ENCODE measurements at regions of chr14 and their contacts with region 1.

Region 1: GRCh38 chr14:76918751-76919543 is 92.7 kb downstream of the LRRC74A start:
- DNase-seq: peak; percentile 53
- ATAC-seq: peak; percentile 33
- H3K4me3 Mint-ChIP-seq: no peak overlapping the region; the same call in 1 of the 2 replicates
- H3K27ac Mint-ChIP-seq: peak overlapping the region; percentile 85
- H3K4me1 Mint-ChIP-seq: peaks cover 81% of the 10 kb centered on the region
- H3K27me3 Mint-ChIP-seq: no peaks in the 10 kb centered on the region
- CTCF ChIP-seq: no peak

Region 2: GRCh38 chr14:76929927-76930326 is 11.0 kb after region 1 on chr14:
- CTCF ChIA-PET with region 1: interaction called, 33 read pairs
- POLR2A ChIA-PET with region 1: interaction called, 3 read pairs
- DNase-seq: no peak
- ATAC-seq: peak; percentile 54
- H3K4me3 Mint-ChIP-seq: no peak overlapping the region
- H3K27ac Mint-ChIP-seq: peak overlapping the region; percentile 73
- H3K4me1 Mint-ChIP-seq: peaks cover 71% of the 10 kb centered on the region
- H3K27me3 Mint-ChIP-seq: no peaks in the 10 kb centered on the region
- CTCF ChIP-seq: no peak

Region 3: DNA sequence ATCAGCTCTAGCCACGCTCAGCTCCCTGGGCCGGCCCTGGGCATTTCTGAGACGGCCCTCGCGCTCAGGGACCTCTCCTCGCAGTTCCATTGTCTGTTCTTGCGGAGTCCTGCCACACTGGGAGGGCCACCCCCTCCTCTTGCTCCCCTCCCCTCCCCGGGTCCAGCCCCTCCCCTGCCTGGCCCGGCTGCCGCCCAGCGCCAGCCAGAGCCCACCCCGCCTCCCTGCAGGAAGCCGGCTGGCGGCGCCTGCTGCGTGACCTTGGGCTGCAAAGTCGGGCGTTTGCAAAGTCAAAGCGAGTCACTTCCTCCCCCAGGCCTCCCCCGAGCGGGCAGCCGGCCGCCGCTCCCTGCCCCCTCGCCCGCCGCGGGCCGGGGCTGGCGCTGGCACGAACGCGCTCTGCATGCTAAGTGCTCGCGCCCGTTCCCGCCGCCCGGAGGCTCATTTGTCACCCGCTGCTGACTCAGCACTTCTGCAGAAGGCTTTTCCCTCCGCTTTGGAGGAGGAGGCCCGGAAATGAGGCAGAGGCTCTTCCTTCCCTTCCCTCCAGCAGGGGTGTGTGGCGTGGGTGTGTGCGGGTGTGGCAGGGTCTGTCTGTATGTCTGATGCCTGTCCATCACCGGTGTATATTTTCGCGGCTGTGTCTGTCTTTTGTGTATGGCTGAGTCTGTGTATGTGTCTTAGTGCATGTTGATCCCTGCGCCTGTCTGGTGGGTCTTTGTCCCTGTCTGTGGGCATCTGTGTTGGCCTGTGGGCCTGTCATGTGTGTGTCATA is 37.6 kb after region 1 on chr14:
- CTCF ChIA-PET with region 1: interaction called, 22 read pairs
- POLR2A ChIA-PET with region 1: interaction called, 11 read pairs
- DNase-seq: peak; percentile 92
- ATAC-seq: peak; percentile 71
- H3K4me3 Mint-ChIP-seq: peak overlapping the region; percentile 55
- H3K27ac Mint-ChIP-seq: peak overlapping the region; percentile 98
- H3K4me1 Mint-ChIP-seq: peaks cover 71% of the 10 kb centered on the region
- H3K27me3 Mint-ChIP-seq: no peaks in the 10 kb centered on the region
- CTCF ChIP-seq: no peak

Region 4: GRCh38 chr14:76985540-76986230 is 66.7 kb after region 1 on chr14:
- CTCF ChIA-PET with region 1: interaction called, 12 read pairs
- POLR2A ChIA-PET with region 1: no interaction called
- DNase-seq: no peak
- ATAC-seq: peak; percentile 23; the same call in 1 of the 2 replicates
- H3K4me3 Mint-ChIP-seq: no peak overlapping the region
- H3K27ac Mint-ChIP-seq: peak overlapping the region; percentile 57; the same call in 1 of the 2 replicates
- H3K4me1 Mint-ChIP-seq: peaks cover 43% of the 10 kb centered on the region
- H3K27me3 Mint-ChIP-seq: no peaks in the 10 kb centered on the region
- CTCF ChIP-seq: no peak

Region 5: DNA sequence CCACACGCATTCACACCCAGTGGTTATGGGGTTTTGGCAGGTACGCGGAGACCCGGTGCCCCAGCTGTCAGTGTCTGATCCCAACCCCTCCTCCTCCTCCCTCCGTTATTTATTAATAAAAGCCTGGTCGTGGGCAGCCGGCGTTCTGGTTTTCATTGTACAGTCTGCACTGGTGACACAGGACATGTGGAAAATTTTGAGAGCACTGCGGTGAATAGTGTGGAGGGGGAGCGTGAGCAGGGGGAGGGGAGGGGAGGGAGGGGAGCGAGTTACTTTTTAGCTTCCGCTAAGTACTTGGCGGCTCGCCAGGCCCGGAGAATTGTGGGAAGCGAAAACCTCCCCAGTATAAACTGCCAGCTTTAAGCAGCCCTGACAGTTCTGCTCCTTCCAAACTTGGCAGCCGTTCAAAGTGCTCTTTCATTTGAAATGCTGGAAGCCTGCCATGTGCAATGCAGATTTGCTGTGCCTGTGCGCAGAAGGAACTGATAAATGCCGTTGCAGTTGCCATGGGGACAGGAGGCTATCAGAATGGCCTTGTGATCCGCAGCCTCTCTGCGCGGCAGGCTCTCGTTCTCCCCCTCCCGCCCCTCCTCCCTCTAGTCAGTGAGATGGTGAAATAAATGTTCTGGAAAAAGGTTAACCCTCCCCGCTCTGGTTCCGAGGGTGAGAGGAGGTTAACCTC is 121.3 kb after region 1 on chr14:
- CTCF ChIA-PET with region 1: interaction called, 16 read pairs
- POLR2A ChIA-PET with region 1: interaction called, 4 read pairs
- DNase-seq: peak; percentile 78
- ATAC-seq: peak; percentile 51
- H3K4me3 Mint-ChIP-seq: peak overlapping the region; percentile 66
- H3K27ac Mint-ChIP-seq: peak overlapping the region; percentile 99
- H3K4me1 Mint-ChIP-seq: peaks cover 86% of the 10 kb centered on the region
- H3K27me3 Mint-ChIP-seq: peaks cover 7% of the 10 kb centered on the region
- CTCF ChIP-seq: no peak

Region 6: GRCh38 chr14:77067632-77068514 is 148.9 kb after region 1 on chr14:
- CTCF ChIA-PET with region 1: interaction called, 66 read pairs
- POLR2A ChIA-PET with region 1: no interaction called
- DNase-seq: peak; percentile 83
- ATAC-seq: peak; percentile 86
- H3K4me3 Mint-ChIP-seq: no peak overlapping the region
- H3K27ac Mint-ChIP-seq: no peak overlapping the region
- H3K4me1 Mint-ChIP-seq: peaks cover 27% of the 10 kb centered on the region
- H3K27me3 Mint-ChIP-seq: no peaks in the 10 kb centered on the region
- CTCF ChIP-seq: peak; percentile 74

Measured in WTC11 (cell line).